Dorsolateral prefrontal cortex (tissue), 120 donors: ENCODE measurements at regions of chr3 and their contacts with region 1.

Region 1: DNA sequence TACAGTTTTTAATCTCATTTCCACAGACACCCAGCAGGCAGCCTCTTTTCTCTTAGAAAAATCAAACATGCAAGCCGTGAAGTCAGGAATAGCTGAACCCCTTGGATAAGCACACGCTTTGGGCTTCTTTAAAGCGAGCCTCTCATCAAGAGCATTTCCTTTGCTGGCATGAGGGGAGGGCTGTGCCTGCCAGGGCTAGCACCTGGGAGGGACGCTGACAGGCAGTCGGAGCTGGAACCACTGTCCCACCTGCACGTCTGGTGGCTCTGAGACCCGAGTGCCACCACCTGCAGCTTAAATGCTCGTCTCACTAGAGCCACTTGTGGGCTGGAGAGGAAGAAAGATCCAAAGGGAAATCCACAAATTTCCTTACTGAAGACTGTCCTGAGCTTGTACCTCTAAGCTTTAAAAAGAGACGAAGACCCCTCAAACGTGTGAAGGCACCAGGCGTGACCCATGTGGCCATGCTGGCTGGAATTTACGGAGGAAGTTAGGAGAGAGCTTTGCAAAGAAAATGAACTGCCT is 9.4 kb downstream of the MAP6D1 start:
- DNase-seq: peak in 1 of 10 donors; percentile 14
- H3K4me3 ChIP-seq: no peak overlapping the region
- H3K27ac ChIP-seq: peak overlapping the region; percentile 69 to 100 (median 99)
- H3K27me3 ChIP-seq: no peaks in the 10 kb centered on the region
- CTCF ChIP-seq: no peak

Region 2: DNA sequence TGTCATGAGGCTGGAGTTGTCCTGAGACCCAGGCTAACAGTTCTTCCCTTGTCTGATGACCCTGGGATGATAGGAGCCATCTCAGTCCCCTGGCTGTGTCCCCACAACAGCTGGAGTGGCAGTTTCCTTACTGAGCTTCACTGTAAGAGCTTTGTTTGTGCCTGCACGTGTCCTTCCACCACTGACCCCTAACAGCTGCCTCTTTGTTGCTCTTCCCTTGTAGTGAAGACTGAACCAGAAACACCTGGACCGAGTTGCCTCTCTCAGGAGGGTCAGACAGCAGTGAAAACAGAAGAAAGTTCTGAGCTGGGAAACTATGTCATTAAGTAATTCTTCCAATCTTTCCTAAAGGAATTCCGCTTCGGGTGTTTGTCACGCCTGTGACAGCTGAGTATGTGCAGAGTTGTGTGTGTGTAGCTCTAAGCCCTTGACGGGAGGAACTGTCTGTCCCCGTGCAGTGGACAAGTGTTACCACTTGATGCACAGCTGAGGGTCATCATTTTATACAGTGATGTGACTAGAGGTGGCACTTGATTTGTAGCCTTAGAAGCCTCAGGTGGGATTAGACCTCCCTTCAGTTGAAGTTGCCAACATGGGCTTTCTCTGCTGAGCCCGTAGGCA is 15.7 kb before region 1 on chr3:
- intact Hi-C with region 1: loop called (anchors 2 kb)
- DNase-seq: peak in 9 of 10 donors; percentile 61 to 95 (median 85)
- H3K4me3 ChIP-seq: no peak overlapping the region
- H3K27ac ChIP-seq: peak overlapping the region; percentile 75 to 100 (median 94)
- H3K27me3 ChIP-seq: no peaks in the 10 kb centered on the region
- CTCF ChIP-seq: peak in 2 of 56 donors; percentile 5 to 8

Region 3: GRCh38 chr3:184040010-184040409 is 224.0 kb after region 1 on chr3:
- intact Hi-C with region 1: no loop called
- DNase-seq: no peak
- H3K4me3 ChIP-seq: no peak overlapping the region
- H3K27ac ChIP-seq: no peak overlapping the region
- H3K27me3 ChIP-seq: no peaks in the 10 kb centered on the region
- CTCF ChIP-seq: no peak